ENCODE measurements at regions of chr19 and their contacts with region 1.

Region 1: GRCh38 chr19:14136509-14137281 is at the start of gene ASF1B:
- DNase-seq: peak; percentile 99
- ATAC-seq: peak; percentile 93
- H3K4me3 ChIP-seq: peak within 1 kb of the TSS; percentile 98
- H3K27ac ChIP-seq: peak within 1 kb of the TSS; percentile 79
- H3K4me1 ChIP-seq: 0 out of 2 replicates have a peak, but pooled peaks cover 8% of the 10 kb centered on the region
- H3K27me3 ChIP-seq: no peaks in the 10 kb centered on the region
- CTCF ChIP-seq: peak; percentile 84 to 98 (median 95)
- EP300 ChIP-seq: no peak
- POLR2A ChIP-seq: peak; percentile 98
- RAD21 ChIP-seq: peak; percentile 91
- polyA plus RNA-seq, gene ASF1B: 10.4 to 23.1 TPM

Region 2: GRCh38 chr19:14081325-14082093 is 55.2 kb before region 1 on chr19:
- CTCF ChIA-PET with region 1: interaction called, 10 read pairs
- POLR2A ChIA-PET with region 1: interaction called, 12 read pairs
- RAD21 ChIA-PET with region 1: interaction called, 27 read pairs
- SMC1A ChIA-PET with region 1: interaction called, 5 read pairs
- in situ Hi-C with region 1: no loop called
- intact Hi-C with region 1: loop called (anchors 2 kb)
- DNase-seq: peak; percentile 99
- ATAC-seq: peak; percentile 94
- H3K4me3 ChIP-seq: peak overlapping the region; percentile 83
- H3K27ac ChIP-seq: peak overlapping the region; percentile 86
- H3K4me1 ChIP-seq: peaks cover 4% of the 10 kb centered on the region; the same call in 1 of the 2 replicates
- H3K27me3 ChIP-seq: no peaks in the 10 kb centered on the region
- CTCF ChIP-seq: no peak
- EP300 ChIP-seq: peak in 1 of 2 experiments; percentile 9; a peak in 1 of 4 replicates
- POLR2A ChIP-seq: peak; percentile 81
- RAD21 ChIP-seq: no peak

Region 3: GRCh38 chr19:14122924-14123323 is 13.8 kb before region 1 on chr19:
- CTCF ChIA-PET with region 1: interaction called, 21 read pairs
- POLR2A ChIA-PET with region 1: interaction called, 6 read pairs
- RAD21 ChIA-PET with region 1: interaction called, 8 read pairs
- SMC1A ChIA-PET with region 1: interaction called, 5 read pairs
- in situ Hi-C with region 1: no loop called
- intact Hi-C with region 1: no loop called
- DNase-seq: no peak
- ATAC-seq: no peak
- H3K4me3 ChIP-seq: no peak overlapping the region
- H3K27ac ChIP-seq: no peak overlapping the region
- H3K4me1 ChIP-seq: peaks cover 16% of the 10 kb centered on the region
- H3K27me3 ChIP-seq: no peaks in the 10 kb centered on the region
- CTCF ChIP-seq: no peak
- EP300 ChIP-seq: no peak
- POLR2A ChIP-seq: no peak
- RAD21 ChIP-seq: no peak

Region 4: DNA sequence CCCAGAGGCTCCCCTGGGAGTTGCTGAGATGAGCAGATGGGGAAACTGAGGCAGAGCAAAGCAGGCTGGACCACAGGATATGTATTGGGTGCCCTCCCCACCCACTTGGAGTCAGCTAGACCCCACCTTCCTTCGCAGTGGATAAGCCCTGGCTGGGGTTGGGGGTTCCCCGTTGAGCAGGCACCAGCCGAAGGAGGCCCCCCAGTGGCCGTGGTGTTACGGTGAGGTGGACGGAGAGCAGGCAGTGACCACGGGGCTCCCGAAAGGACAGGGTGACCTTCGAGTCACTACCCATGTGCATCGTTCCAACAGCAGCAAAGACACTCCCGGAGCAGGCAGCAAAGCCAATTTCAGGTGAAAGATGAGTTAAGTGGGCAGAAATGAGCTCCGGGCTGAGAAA is 182.2 kb after region 1 on chr19:
- CTCF ChIA-PET with region 1: no interaction called
- POLR2A ChIA-PET with region 1: no interaction called
- RAD21 ChIA-PET with region 1: interaction called, 11 read pairs
- SMC1A ChIA-PET with region 1: no interaction called
- in situ Hi-C with region 1: no loop called
- intact Hi-C with region 1: no loop called
- DNase-seq: no peak
- ATAC-seq: peak; percentile 90
- H3K4me3 ChIP-seq: no peak overlapping the region
- H3K27ac ChIP-seq: no peak overlapping the region
- H3K4me1 ChIP-seq: no peaks in the 10 kb centered on the region
- H3K27me3 ChIP-seq: no peaks in the 10 kb centered on the region
- CTCF ChIP-seq: peak; percentile 45 to 77 (median 68); a peak in 5 of 6 replicates
- EP300 ChIP-seq: no peak
- POLR2A ChIP-seq: no peak
- RAD21 ChIP-seq: peak; percentile 78

Region 5: GRCh38 chr19:14479975-14480699 is 343.4 kb after region 1 on chr19:
- CTCF ChIA-PET with region 1: interaction called, 17 read pairs
- POLR2A ChIA-PET with region 1: no interaction called
- RAD21 ChIA-PET with region 1: interaction called, 8 read pairs
- SMC1A ChIA-PET with region 1: no interaction called
- in situ Hi-C with region 1: no loop called
- intact Hi-C with region 1: loop called (anchors 2 kb)
- DNase-seq: no peak
- ATAC-seq: peak; percentile 92
- H3K4me3 ChIP-seq: no peak overlapping the region
- H3K27ac ChIP-seq: no peak overlapping the region
- H3K4me1 ChIP-seq: no peaks in the 10 kb centered on the region; the same call in 1 of the 2 replicates
- H3K27me3 ChIP-seq: no peaks in the 10 kb centered on the region
- CTCF ChIP-seq: peak; percentile 86 to 96 (median 86)
- EP300 ChIP-seq: no peak
- POLR2A ChIP-seq: no peak
- RAD21 ChIP-seq: peak; percentile 53

Measured in GM12878 (cell line).